Heart left ventricle (tissue), 16 donors: ENCODE measurements at regions of chr9 and their contacts with region 1.

Region 1: GRCh38 chr9:28234894-28235277 is 661.6 kb upstream of the C9orf72 start:
- DNase-seq: no peak
- ATAC-seq: no peak
- H3K4me3 ChIP-seq: no peak overlapping the region
- H3K27ac ChIP-seq: no peak overlapping the region
- H3K4me1 ChIP-seq: no peaks in the 10 kb centered on the region
- H3K27me3 ChIP-seq: no peaks in the 10 kb centered on the region
- CTCF ChIP-seq: no peak
- POLR2A ChIP-seq: no peak

Region 2: DNA sequence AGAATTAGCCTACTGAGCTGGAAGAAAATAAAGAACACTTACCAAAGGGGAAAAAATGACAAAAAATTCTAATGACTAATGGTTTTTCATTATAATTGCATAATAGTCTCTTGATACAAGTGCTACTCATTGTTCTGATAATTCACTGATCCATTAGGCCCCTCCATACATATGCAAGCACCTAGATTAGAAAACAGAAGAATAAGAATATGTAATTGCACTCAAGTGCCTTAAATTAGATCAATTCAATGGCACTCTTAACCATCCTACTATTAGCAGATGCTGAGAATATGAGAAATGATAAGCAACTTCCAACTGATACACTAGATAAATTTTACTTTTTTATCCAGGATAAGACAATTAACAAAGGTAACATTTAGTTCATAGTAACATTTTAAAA is 220.7 kb before region 1 on chr9:
- intact Hi-C with region 1: no loop called
- DNase-seq: no peak
- ATAC-seq: no peak
- H3K4me3 ChIP-seq: no peak overlapping the region
- H3K27ac ChIP-seq: no peak overlapping the region
- H3K4me1 ChIP-seq: no peaks in the 10 kb centered on the region
- H3K27me3 ChIP-seq: no peaks in the 10 kb centered on the region
- CTCF ChIP-seq: no peak
- POLR2A ChIP-seq: no peak

Region 3: DNA sequence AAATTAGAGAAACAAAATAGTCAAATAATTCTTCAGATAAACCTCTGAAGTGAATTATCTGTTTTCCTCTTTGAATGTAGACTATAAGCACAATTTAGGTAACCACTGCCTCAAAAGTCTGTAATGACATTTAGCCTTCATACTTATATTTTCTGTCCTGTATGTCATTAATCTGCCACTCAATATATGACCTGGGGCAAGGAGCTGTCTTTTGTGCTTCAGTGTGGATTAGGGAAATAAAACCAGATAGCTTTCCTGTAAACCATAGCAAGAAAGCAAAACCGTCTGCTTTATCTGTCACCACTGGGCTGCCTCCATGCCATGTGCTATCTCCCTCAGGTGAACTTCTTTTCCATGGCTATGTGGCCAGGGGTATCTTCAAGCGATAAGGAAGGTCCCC is 55.0 kb before region 1 on chr9:
- intact Hi-C with region 1: loop called in 1 of 10 experiments (anchors 10 kb)
- DNase-seq: no peak
- ATAC-seq: no peak
- H3K4me3 ChIP-seq: no peak overlapping the region
- H3K27ac ChIP-seq: no peak overlapping the region
- H3K4me1 ChIP-seq: no peaks in the 10 kb centered on the region
- H3K27me3 ChIP-seq: peaks cover 0 to 5% (median 0%) of the 10 kb centered on the region in 9 donors
- CTCF ChIP-seq: no peak
- POLR2A ChIP-seq: no peak